GM18951 (cell line): ENCODE measurements at regions of chr22 and their contacts with region 1.

Region 1: DNA sequence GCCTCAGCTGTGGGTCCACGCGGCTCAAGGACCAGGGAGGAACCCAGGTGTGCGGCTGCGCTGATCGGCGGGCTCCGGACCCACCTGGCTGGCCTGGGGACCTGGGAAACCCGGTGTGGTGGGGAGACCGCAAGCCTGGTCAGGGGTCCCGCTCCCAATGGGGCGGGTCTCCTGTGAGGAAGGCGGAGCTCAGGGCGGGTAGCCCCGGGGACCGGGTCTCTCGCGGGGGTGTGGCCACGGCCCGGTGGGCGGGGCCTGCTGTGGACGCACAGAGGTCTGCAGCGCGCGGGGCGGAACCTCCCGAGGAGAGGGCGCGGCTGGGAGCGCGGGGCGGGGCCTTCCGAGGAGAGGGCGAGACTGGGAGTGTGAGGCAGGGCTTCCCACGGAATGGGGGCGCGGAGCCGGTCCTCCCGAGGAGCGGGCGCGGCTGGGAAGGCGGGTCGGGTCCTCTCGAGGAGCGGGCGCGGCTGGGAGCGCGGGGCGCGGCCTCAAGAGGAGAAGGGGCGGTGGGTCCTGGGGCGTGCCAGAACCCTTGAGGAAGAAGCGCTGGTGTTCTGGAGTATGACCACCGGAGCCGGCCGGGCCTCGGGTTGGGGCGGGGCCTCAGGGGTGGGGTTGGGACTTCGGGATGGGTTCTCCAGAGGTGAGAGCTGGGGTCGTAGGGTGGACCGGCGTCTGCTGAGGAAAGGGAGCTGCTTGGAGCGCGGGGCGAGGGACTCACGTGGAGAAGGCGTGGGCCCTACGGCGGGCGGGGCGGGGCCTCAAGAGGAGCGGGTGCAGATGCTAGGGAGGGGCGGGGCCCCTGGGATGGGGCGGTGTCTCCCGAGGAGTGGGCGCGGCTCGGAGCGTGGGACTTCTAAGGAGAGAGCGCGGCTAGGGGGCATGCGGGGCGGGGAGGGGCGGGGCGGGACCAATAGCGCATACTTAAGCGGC is 20.8 kb downstream of the DGCR6L start:
- POLR2A ChIP-seq: no peak

Region 2: DNA sequence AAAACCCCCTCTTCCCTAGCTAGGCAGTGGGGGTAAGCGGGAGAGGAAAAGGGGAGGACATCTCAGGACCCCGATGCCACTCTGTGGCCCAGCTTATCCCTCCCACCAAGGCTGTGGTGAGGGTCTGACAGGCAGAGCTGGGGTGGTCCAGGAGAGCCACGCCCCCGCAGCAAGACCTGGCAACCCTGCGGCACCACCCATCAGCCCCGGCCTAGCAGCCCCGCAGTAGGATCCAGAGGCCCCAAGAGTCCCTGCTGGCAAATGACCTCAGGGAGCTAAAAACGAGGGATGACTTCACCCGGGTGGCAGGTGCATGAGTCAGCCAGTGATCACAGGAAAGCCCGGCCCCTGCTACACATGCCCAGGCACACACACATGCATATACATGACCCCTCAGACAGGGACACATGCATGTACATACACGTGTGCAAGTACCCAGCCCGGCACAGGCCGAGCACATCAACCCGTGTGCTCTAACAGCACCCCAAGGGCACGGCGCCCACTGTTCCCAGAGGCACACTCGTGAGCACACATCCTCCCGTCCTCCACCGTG is 314.8 kb before region 1 on chr22:
- in situ Hi-C with region 1: no loop called
- POLR2A ChIP-seq: no peak

Region 3: GRCh38 chr22:20156611-20157429 is 142.2 kb before region 1 on chr22:
- in situ Hi-C with region 1: loop called (anchors 10 kb)
- POLR2A ChIP-seq: no peak